ENCODE measurements at regions of chr11 and their contacts with region 1.

Region 1: GRCh38 chr11:1844221-1845094 is 5.7 kb downstream of the TNNI2 start:
- DNase-seq: peak; percentile 41 to 77 (median 44)
- H3K4me3 ChIP-seq: peak overlapping the region; percentile 21 to 60
- H3K4me3 Mint-ChIP-seq: peak overlapping the region; percentile 64 to 90 (median 80)
- H3K27ac ChIP-seq: peak overlapping the region; percentile 43
- H3K27ac Mint-ChIP-seq: peak overlapping the region; percentile 87 to 97 (median 94)
- H3K4me1 ChIP-seq: peaks cover 64% of the 10 kb centered on the region
- H3K4me1 Mint-ChIP-seq: peaks cover 34 to 75% (median 49%) of the 10 kb centered on the region in 4 donors
- H3K27me3 ChIP-seq: no peaks in the 10 kb centered on the region
- H3K27me3 Mint-ChIP-seq: no peaks in the 10 kb centered on the region

Region 2: DNA sequence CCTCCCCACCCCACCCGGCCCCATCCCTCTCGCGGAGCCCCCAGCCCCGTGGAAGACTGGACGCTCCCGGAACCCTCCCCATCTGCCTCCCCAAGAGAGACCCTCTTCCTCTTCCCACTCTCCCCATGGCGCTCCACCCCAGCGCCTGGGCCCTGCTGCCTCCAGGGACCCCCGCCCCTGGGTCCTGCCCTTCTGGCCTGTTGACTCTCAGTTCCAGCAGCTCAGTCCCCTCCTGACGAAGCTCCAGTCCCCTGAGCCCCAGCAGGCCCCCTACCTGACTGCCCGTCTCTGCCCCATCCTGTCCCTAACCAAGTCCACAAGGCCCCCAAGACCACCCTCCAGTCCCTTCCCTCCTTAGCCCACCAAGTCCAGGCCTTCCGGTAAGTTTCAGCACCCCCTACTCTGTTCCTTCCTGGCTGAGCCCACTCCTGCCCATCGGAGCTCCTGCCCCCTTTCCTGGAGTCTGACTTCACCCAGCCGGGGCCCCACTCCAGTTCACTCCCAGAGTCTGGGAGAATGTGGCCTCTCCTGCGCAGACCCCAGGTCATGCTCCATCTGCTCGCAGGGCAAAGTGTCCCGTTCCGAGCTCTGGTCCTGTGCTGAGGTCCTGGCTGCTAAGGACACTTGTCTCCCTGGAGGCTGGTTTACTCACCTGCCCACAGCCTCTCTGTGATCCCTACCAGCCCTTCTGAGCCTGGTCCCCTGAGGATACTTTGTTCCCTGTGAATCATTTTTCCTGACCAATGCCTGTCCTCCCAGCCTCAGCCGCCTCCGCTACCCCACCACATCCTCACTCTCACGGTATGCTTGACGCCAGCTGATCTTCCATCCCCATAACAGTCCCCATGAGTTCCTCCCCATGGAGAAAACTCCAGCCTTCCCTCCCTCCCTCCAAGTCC is 94.8 kb before region 1 on chr11:
- CTCF ChIA-PET with region 1: no interaction called
- POLR2A ChIA-PET with region 1: no interaction called
- intact Hi-C with region 1: no loop called
- DNase-seq: no peak
- H3K4me3 ChIP-seq: no peak overlapping the region
- H3K4me3 Mint-ChIP-seq: peak overlapping the region in 7 of 8 donors; percentile 13 to 74 (median 26)
- H3K27ac ChIP-seq: no peak overlapping the region
- H3K27ac Mint-ChIP-seq: peak overlapping the region in 1 of 7 donors; percentile 42
- H3K4me1 ChIP-seq: peaks cover 10% of the 10 kb centered on the region
- H3K4me1 Mint-ChIP-seq: peaks cover 4 to 30% (median 21%) of the 10 kb centered on the region in 4 donors
- H3K27me3 ChIP-seq: no peaks in the 10 kb centered on the region
- H3K27me3 Mint-ChIP-seq: peaks cover 11 to 12% of the 10 kb centered on the region in 2 donors

Region 3: GRCh38 chr11:1870721-1871466 is 26.4 kb after region 1 on chr11:
- CTCF ChIA-PET with region 1: no interaction called
- POLR2A ChIA-PET with region 1: interaction called, 189 read pairs
- intact Hi-C with region 1: no loop called
- DNase-seq: peak; percentile 55 to 75 (median 65)
- H3K4me3 ChIP-seq: no peak overlapping the region
- H3K4me3 Mint-ChIP-seq: peak overlapping the region; percentile 72 to 91 (median 82)
- H3K27ac ChIP-seq: peak overlapping the region; percentile 28
- H3K27ac Mint-ChIP-seq: peak overlapping the region; percentile 84 to 97 (median 91)
- H3K4me1 ChIP-seq: peaks cover 65% of the 10 kb centered on the region
- H3K4me1 Mint-ChIP-seq: peaks cover 30 to 74% (median 54%) of the 10 kb centered on the region in 4 donors
- H3K27me3 ChIP-seq: no peaks in the 10 kb centered on the region
- H3K27me3 Mint-ChIP-seq: no peaks in the 10 kb centered on the region

Region 4: DNA sequence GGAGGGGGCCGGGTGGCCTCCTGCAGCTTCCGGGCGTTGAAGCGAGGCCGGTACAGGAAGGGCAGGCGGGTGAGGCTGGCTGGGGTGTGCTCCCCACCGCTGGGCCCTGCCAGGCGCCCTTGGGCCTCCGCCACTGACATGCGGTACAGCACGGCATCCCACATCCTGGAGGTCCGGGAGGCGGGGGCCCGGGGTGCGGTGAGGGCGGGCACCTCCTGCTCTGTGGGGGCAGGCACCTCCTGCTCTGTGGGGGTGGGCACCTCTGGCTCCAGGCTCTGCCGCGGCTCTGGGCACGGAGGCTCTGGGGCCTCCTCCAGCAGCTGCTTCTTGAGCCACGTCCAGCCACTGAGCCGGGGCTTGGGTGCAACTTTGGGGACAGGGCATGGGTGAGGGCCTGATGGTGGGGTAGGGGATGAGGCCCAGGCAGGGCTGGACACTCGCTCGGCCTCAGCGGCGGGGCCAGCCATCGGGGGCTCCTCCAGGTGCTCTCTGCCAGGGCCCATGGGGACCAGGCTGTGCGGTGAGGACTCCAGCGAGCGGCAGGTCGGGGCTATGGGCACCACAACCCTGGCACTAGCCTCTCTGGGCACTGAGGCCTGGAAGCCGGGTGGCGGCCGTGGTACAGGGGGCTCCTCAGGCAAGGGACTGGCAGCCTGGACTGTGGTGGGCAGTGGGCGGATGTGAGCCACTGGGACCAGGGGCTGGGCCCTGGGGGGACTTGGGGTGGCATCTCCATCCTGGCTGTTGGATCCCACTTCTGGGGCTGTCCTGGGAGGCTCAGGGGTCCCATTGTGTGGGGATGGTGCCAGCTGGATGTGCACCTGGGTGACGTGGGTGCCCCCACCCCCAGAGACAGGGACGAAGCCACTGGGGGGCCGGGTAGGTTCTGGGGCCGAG is 45.0 kb after region 1 on chr11:
- CTCF ChIA-PET with region 1: no interaction called
- POLR2A ChIA-PET with region 1: interaction called, 189 read pairs
- intact Hi-C with region 1: no loop called
- DNase-seq: peak; percentile 83 to 85 (median 84)
- H3K4me3 ChIP-seq: peak overlapping the region in 1 of 2 donors; percentile 39
- H3K4me3 Mint-ChIP-seq: peak overlapping the region; percentile 14 to 84 (median 70)
- H3K27ac ChIP-seq: peak overlapping the region; percentile 53
- H3K27ac Mint-ChIP-seq: peak overlapping the region; percentile 17 to 94 (median 88)
- H3K4me1 ChIP-seq: peaks cover 47% of the 10 kb centered on the region
- H3K4me1 Mint-ChIP-seq: peaks cover 23 to 44% (median 32%) of the 10 kb centered on the region in 4 donors
- H3K27me3 ChIP-seq: no peaks in the 10 kb centered on the region
- H3K27me3 Mint-ChIP-seq: no peaks in the 10 kb centered on the region

Measured in CD4-positive, alpha-beta memory T cell (primary cell).